ENCODE measurements at regions of chr11 and their contacts with region 1.

Region 1: GRCh38 chr11:34357701-34358257 is at the start of gene ABTB2:
- DNase-seq: peak; percentile 92 to 98 (median 96)
- ATAC-seq: peak; percentile 86 to 90
- H3K4me3 Mint-ChIP-seq: peak within 1 kb of the TSS; percentile 84 to 94 (median 90)
- H3K27ac Mint-ChIP-seq: peak within 1 kb of the TSS; percentile 45 to 95 (median 91)
- H3K4me1 Mint-ChIP-seq: peaks cover 15 to 34% (median 24%) of the 10 kb centered on the region in 4 donors
- H3K27me3 Mint-ChIP-seq: peaks cover 27 to 57% (median 39%) of the 10 kb centered on the region in 5 donors
- polyA plus RNA-seq, gene ABTB2: 0.05 TPM in 1 of 3 donors, not detected in the others

Region 2: DNA sequence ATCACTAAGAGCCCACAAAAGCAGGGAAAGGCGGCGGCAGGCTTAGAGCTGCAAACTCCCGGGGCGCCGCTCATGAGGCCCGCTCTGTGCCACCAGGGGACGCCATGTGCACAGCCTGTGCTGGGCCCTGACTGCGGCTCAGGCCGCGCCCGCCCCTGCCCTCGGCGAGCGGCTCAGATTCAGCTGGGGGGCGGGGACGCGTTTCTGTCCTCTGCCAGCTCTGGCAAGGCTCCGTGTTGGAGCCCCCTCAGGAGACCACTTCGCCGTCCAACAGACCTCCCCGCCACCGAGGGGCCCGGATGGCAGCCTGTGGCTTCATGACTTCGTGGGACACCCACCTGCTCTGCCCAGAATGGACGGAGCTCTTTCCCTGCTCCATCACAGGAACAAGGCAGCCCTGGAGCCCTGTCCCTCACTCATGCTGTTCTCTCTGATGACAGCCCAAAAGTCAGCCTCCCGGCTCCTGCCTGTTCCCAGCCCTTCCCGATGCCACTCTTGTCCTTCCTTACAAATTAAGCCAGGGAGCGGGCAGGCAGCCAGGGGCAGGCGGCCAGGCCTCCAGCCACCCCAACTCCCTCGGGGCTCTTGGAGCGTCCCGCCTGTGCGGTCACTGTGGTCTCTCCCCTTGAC is 183.3 kb before region 1 on chr11:
- POLR2A ChIA-PET with region 1: interaction called, 30 read pairs
- DNase-seq: peak; percentile 63 to 88 (median 76)
- ATAC-seq: peak; percentile 100
- H3K4me3 Mint-ChIP-seq: peak overlapping the region in 9 of 10 donors; percentile 39 to 73 (median 54)
- H3K27ac Mint-ChIP-seq: peak overlapping the region in 1 of 10 donors; percentile 62
- H3K4me1 Mint-ChIP-seq: peaks cover 2 to 6% (median 4%) of the 10 kb centered on the region in 4 donors
- H3K27me3 Mint-ChIP-seq: peaks cover 4 to 13% (median 7%) of the 10 kb centered on the region in 5 donors

Region 3: DNA sequence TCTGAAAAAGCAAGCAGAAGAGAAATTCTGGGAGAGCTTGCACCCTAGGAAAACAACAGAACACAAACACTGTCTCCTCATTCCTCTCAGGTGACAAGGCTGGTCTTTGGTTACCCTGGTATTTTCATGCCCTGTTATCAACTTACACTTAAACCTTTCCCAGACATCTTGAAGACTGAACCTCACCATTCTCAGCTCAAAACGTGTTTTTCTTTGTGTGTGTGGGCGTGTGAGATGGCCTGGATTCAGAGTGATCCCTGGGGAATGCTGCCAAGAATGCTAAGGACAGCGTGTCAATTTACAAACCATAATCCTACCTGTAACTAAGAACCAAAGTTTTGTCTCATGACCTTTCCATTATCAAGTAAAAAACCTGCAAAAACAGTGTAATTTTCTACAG is 122.5 kb after region 1 on chr11:
- POLR2A ChIA-PET with region 1: no interaction called
- DNase-seq: no peak
- ATAC-seq: no peak
- H3K4me3 Mint-ChIP-seq: no peak overlapping the region
- H3K27ac Mint-ChIP-seq: peak overlapping the region in 1 of 10 donors; percentile 30
- H3K4me1 Mint-ChIP-seq: no peaks in the 10 kb centered on the region
- H3K27me3 Mint-ChIP-seq: peaks cover 0 to 11% (median 1%) of the 10 kb centered on the region in 5 donors